BJ (cell line): ENCODE measurements at regions of chr6 and their contacts with region 1.

Region 1: DNA sequence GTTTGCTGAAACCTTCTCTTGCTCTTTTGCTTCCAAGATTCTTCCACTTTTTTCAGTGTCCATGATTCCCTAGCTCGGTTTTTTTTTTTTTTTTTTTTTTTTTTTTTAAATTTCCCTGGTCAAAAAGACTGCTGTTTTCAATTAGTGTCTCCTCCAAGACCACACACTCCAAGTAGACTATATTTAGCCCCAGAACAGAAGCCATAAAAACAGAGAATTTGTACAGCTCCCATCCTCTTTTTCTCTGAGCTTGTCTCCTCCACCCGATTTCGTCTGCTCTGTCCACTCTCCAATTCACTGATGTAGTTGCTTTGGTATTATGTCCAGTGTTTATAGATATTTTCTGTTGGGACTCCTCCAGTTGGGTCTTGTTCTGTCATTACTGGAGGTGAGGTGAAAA is 37.6 kb downstream of the RSPH3 start:
- DNase-seq: peak; percentile 29
- H3K4me3 ChIP-seq: no peak overlapping the region
- H3K27me3 ChIP-seq: no peaks in the 10 kb centered on the region
- CTCF ChIP-seq: no peak

Region 2: DNA sequence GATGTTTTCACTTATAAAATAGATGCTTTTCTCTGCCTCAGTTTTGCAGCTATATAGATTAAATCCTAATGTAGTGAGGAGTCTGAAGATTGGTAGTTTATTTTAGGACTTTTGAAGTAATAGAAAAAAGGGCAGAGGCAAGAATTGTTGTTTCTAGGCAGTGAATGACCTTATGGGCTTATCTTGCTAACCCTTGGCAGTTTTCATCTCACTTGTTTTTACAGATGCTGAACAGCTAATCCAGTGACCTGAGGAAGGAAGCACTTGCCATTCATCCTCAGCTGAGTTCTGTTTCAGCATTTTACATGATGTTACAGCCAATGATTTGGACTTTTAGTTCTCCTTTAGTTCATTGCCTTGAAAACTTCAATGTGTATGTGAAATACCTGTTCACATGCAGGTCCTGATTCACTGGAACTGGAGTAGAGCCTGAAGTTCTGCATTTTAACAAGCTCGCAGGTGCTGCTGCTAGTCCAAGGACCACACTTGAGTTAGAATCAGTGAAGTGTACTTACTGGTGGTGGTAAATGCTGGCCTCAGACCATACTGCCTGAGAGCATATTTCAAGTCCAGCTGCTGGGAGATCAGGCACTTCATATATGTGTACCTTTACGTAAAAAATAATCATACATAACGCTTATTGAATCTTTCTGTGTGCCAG is 563.2 kb before region 1 on chr6:
- CTCF ChIA-PET with region 1: no interaction called
- POLR2A ChIA-PET with region 1: no interaction called
- DNase-seq: no peak
- H3K4me3 ChIP-seq: no peak overlapping the region
- H3K27me3 ChIP-seq: no peaks in the 10 kb centered on the region
- CTCF ChIP-seq: no peak

Region 3: DNA sequence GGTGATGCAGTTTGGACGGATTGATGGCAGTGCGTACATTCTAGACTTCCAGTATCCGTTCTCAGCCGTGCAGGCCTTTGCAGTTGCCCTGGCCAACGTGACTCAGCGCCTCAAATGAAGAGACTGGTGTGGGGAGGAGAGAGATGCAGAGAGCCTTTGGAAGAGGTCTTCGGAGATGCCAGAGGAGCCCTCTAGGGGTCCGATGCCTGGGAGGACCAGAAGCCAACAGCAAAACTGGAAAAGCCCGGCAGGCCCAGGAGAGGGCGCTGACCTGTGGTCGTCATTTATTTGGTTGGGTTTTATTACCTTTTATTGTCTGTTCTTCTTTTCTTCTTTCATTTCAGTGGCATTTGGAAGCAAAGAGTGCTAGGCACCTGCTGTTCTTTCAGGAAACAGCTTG is 455.8 kb before region 1 on chr6:
- CTCF ChIA-PET with region 1: no interaction called
- POLR2A ChIA-PET with region 1: no interaction called
- DNase-seq: no peak
- H3K4me3 ChIP-seq: no peak overlapping the region
- H3K27me3 ChIP-seq: no peaks in the 10 kb centered on the region
- CTCF ChIP-seq: no peak

Region 4: GRCh38 chr6:158697811-158698210 is 264.6 kb before region 1 on chr6:
- CTCF ChIA-PET with region 1: no interaction called
- POLR2A ChIA-PET with region 1: interaction called, 13 read pairs
- DNase-seq: peak; percentile 81
- H3K4me3 ChIP-seq: no peak overlapping the region
- H3K27me3 ChIP-seq: no peaks in the 10 kb centered on the region
- CTCF ChIP-seq: no peak

Region 5: DNA sequence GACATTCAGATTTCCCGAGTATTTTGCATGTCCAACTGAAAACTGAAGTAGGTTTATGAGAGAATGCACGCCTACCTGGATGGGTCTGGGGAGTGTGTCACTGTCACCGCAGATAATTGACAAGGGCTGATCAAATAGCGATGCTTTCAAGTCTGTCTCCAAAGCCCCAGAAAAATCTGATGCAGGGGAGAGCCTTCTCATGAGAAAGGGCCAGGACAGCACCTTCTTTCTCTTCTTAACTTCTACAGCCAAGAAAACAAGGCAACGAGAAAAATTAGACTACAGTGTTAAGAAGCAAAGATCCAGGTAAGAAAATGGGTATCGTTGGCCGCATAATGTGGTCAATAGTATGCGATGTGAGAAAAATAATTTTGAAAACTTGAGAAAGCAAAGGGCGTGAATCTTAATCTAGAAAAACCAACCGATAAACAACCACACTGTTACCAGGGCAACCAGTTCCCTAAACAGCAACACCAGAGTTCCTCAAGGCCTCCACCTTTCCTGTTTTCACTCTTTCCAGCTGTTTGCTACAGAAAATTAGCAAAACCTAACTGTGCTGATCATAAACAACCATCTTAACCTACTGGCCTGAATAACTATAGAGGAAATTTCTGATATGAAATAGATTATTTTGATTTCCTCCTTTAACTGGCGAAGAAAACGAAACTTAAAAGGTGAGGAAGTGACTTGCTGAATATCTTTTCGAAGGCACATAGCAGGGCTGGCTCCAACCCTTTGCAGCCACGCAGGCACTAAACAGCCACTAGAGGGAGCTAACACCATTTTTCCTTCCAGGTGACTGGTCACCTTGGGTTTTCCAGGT is 79.8 kb after region 1 on chr6:
- CTCF ChIA-PET with region 1: no interaction called
- POLR2A ChIA-PET with region 1: no interaction called
- DNase-seq: no peak
- H3K4me3 ChIP-seq: no peak overlapping the region
- H3K27me3 ChIP-seq: peaks cover 9% of the 10 kb centered on the region
- CTCF ChIP-seq: peak; percentile 94

Region 6: GRCh38 chr6:159249128-159249527 is 286.8 kb after region 1 on chr6:
- CTCF ChIA-PET with region 1: no interaction called
- POLR2A ChIA-PET with region 1: no interaction called
- DNase-seq: no peak
- H3K4me3 ChIP-seq: no peak overlapping the region
- H3K27me3 ChIP-seq: no peaks in the 10 kb centered on the region
- CTCF ChIP-seq: no peak